B cell (primary cell): ENCODE measurements at regions of chr1 and their contacts with region 1.

Region 1: DNA sequence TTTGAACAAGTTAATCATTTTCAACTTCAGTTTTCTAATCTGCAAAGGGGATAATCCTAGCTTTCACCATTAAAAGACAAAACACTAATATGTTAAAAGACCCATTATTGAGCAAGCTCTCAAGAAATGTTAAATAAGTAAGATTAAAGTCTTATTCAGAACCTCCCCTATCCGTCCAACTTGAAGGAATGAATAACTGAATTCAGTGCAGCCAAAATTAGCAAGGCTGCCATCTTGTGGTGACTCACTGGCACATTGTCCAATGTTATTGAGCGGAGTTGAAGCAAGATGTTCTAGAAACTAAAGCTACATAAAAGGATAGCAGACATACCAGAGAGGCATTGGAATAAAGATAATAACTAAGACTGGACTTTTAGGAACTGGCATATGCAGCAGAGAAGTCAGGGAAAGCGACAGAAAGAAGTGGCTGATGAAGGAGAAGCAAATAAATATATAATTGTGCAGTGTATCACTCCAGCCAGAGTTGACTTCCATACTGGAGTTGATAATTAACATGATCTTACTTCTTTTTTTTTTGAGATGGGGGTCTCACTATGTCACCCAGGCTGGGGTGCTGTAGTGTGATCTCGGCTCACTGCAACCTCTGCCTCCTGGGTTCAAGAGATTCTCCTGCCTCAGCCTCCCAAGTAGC is 8.2 kb upstream of the CAP1 start:
- DNase-seq: peak; percentile 72
- ATAC-seq: peak; percentile 45
- H3K4me3 ChIP-seq: no peak overlapping the region
- H3K4me3 Mint-ChIP-seq: no peak overlapping the region
- H3K27ac ChIP-seq: no peak overlapping the region
- H3K27ac Mint-ChIP-seq: peak overlapping the region; percentile 48
- H3K4me1 ChIP-seq: peaks cover 47 to 58% of the 10 kb centered on the region in 2 donors
- H3K4me1 Mint-ChIP-seq: peaks cover 44% of the 10 kb centered on the region
- H3K27me3 ChIP-seq: no peaks in the 10 kb centered on the region
- H3K27me3 Mint-ChIP-seq: no peaks in the 10 kb centered on the region
- CTCF ChIP-seq: peak; percentile 85

Region 2: GRCh38 chr1:39776400-39776713 is 256.0 kb before region 1 on chr1:
- CTCF ChIA-PET with region 1: no interaction called
- POLR2A ChIA-PET with region 1: no interaction called
- intact Hi-C with region 1: no loop called
- DNase-seq: no peak
- ATAC-seq: peak; percentile 41
- H3K4me3 ChIP-seq: no peak overlapping the region
- H3K4me3 Mint-ChIP-seq: peak overlapping the region; percentile 30
- H3K27ac ChIP-seq: no peak overlapping the region
- H3K27ac Mint-ChIP-seq: peak overlapping the region; percentile 85
- H3K4me1 ChIP-seq: peaks cover 0 to 5% of the 10 kb centered on the region in 2 donors
- H3K4me1 Mint-ChIP-seq: peaks cover 10% of the 10 kb centered on the region
- H3K27me3 ChIP-seq: no peaks in the 10 kb centered on the region
- H3K27me3 Mint-ChIP-seq: no peaks in the 10 kb centered on the region
- CTCF ChIP-seq: no peak

Region 3: DNA sequence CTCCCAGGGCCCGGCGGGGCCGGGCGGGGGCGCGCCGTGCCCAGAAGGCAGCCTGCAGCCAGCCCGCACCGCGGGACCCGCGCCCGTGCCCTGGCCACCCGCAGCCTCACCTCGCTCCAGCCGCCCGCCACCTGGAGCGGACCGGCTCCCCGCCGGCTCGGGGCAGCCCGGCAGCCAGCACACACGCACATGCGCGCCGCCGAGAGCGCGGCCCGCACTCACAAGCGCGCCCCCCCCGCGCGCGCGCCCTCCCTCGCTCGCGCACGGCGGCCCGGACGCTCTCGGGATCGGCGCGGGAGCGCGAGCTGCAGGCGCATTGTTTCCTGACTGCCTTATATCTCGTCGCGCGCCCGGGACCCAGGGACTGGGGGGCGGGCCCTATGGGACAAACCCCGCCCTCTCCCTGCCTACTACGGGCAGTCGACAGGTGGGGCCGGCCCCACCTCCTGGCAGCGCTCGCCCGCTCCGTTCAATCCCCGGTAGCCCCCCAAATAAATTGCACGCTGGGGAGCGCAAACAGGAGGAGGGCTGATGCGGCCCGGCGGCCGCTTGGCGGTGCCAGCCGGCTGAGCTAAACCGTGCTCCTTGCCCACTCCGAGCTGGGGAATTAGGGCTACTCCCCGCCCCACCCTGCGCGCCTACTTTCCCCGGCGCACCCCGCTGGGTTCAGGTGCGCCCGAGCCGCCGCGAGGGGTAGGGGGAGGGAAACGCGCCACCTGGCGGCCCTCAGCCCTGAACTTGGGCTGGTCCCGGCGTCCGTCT is 130.5 kb before region 1 on chr1 and contains the start of gene MYCL:
- CTCF ChIA-PET with region 1: interaction called, 13 read pairs
- POLR2A ChIA-PET with region 1: no interaction called
- intact Hi-C with region 1: no loop called
- DNase-seq: peak; percentile 80
- ATAC-seq: peak; percentile 82
- H3K4me3 ChIP-seq: peak within 1 kb of the TSS; percentile 21 to 71 (median 61)
- H3K4me3 Mint-ChIP-seq: peak within 1 kb of the TSS; percentile 85
- H3K27ac ChIP-seq: no peak within 1 kb of the TSS
- H3K27ac Mint-ChIP-seq: peak within 1 kb of the TSS; percentile 20
- H3K4me1 ChIP-seq: peaks cover 14 to 20% of the 10 kb centered on the region in 2 donors
- H3K4me1 Mint-ChIP-seq: peaks cover 6% of the 10 kb centered on the region
- H3K27me3 ChIP-seq: peaks cover 0 to 71% (median 25%) of the 10 kb centered on the region in 4 experiments
- H3K27me3 Mint-ChIP-seq: peaks cover 47% of the 10 kb centered on the region
- CTCF ChIP-seq: peak; percentile 77
- total RNA-seq, gene MYCL: 0.49 and 0.62 TPM in 2 replicates

Region 4: DNA sequence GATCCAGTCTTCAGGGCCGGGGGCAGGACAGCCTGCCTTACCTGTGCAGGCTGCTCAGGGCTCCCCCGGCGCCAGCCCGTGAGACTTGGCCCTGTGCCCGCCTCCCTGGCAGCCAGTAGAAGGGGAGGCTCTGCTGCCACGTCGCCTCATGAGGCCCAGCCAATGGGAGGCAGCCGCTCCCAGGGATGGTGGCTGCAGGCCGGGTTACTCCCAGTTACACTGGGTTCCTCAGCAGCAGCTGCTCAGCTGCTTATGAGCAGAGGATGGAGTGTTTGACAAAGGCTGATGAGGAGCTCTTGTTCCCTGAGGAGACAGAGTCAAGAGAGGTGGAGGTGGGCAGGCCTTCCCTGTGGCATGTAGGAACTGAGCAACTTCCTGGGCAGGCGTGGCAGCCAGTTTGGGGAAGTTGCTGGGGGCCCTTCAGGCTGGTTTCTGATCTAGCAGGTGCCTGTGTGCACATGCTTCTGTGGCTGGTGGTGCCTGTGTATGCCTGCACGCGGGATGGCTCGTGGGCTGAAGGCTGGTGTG is 71.9 kb before region 1 on chr1:
- CTCF ChIA-PET with region 1: interaction called, 10 read pairs
- POLR2A ChIA-PET with region 1: no interaction called
- intact Hi-C with region 1: no loop called
- DNase-seq: peak; percentile 88
- ATAC-seq: peak; percentile 95
- H3K4me3 ChIP-seq: peak overlapping the region; percentile 6 to 34 (median 26)
- H3K4me3 Mint-ChIP-seq: peak overlapping the region; percentile 77
- H3K27ac ChIP-seq: peak overlapping the region; percentile 71 to 73
- H3K27ac Mint-ChIP-seq: peak overlapping the region; percentile 93
- H3K4me1 ChIP-seq: peaks cover 25 to 46% of the 10 kb centered on the region in 2 donors
- H3K4me1 Mint-ChIP-seq: peaks cover 47% of the 10 kb centered on the region
- H3K27me3 ChIP-seq: no peaks in the 10 kb centered on the region
- H3K27me3 Mint-ChIP-seq: no peaks in the 10 kb centered on the region
- CTCF ChIP-seq: no peak

Region 5: GRCh38 chr1:40049725-40050124 is 17.4 kb after region 1 on chr1:
- CTCF ChIA-PET with region 1: interaction called, 10 read pairs
- POLR2A ChIA-PET with region 1: no interaction called
- intact Hi-C with region 1: no loop called
- DNase-seq: no peak
- ATAC-seq: no peak
- H3K4me3 ChIP-seq: no peak overlapping the region
- H3K4me3 Mint-ChIP-seq: peak overlapping the region; percentile 13
- H3K27ac ChIP-seq: peak overlapping the region in 1 of 2 donors; percentile 50
- H3K27ac Mint-ChIP-seq: peak overlapping the region; percentile 76
- H3K4me1 ChIP-seq: peaks cover 83 to 87% of the 10 kb centered on the region in 2 donors
- H3K4me1 Mint-ChIP-seq: peaks cover 72% of the 10 kb centered on the region
- H3K27me3 ChIP-seq: no peaks in the 10 kb centered on the region
- H3K27me3 Mint-ChIP-seq: no peaks in the 10 kb centered on the region
- CTCF ChIP-seq: no peak